ENCODE measurements at regions of chr9 and their contacts with region 1.

Region 1: DNA sequence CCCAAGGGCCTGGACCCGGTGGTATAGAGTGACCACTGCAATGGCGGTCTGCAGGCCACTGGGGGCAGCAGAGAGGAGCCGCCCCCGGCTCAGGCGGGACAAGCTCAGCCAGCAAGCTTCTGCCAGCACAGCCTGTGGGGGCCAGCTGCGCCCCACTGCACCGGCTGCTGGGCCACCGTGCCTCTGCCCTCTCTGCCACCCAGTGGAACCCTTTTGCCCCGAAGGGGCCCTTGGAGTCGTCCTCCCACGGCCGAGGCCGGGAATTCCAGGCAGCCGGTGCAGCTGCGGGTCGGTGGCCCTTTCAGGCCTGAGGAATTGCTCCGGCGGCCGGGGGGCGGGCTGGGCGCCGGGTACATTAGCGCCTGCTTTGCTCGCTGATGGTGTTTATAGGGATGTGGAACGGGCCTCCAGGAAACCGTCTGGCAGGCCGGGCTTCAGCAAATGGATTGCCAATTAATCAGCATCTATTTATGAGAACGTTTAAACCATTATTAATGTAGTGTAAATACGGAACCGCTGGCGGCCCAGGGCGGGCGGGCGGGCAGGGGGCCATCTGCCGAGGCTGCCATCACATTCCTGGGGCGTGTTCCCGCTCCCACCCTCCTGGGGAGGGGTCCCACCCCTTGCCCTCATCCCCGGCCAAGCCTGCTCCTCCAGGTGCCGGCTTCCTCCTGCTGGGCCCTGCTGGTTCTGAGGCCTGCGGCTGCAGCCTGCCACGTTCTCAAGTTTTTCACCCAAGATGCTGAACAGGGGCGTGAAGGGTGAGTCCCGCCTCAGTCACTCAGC is 127.4 kb downstream of the BARX1 start:
- DNase-seq: peak in 2 of 3 donors; percentile 55 to 63
- ATAC-seq: peak; percentile 89 to 98 (median 96)
- H3K4me3 ChIP-seq: peak overlapping the region; percentile 6 to 33 (median 24)
- H3K27ac ChIP-seq: no peak overlapping the region
- H3K4me1 ChIP-seq: peaks cover 0 to 9% (median 0%) of the 10 kb centered on the region in 4 donors
- H3K27me3 ChIP-seq: peaks cover 0 to 5% of the 10 kb centered on the region in 2 donors
- CTCF ChIP-seq: peak; percentile 57 to 88 (median 83)
- POLR2A ChIP-seq: no peak

Region 2: DNA sequence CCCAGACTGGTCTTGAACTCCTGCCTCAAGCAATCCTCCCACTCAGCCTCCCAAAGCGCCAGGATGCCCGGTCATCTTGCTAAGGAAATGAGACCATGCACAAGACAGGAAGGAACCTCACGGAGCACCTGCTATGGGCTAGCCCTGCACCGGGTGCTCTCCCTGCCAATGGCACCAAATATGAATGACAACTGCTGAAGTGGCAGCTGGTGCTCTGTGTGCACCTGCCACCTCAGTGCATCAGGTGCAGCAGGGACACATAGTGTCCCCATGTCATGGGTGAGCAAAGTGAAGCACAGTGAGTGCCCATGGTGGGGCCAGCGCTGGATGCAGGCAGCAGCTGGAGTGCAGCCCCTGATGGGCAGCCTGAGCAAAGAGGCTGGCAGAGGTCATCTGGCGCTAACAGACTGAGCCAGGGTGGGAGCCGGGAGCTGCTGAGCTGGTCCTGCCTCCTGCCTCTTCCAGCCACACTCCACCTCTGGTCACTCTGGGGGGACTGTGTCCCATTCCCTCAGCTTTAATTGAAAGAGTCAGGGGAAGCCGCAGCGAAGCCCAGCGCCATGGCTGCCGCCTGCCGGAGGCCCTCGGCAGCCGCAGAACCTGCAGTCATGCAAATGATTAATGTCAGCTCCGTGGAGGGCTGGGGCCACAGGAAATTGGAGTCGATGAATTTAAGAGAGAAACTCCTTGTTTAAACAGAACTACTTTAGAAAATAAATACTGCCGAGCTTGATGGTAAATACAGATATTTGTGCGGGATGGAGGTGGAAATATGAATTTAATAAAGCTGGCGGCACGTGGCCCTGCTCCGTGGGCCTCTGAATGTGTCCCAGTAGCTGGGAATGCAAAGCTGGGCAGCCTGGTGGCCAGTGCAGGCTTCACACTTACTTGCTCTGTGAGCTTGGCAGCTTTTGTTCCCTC is 81.1 kb after region 1 on chr9:
- intact Hi-C with region 1: loop called in 1 of 2 experiments (anchors 10 kb)
- DNase-seq: peak in 2 of 3 donors; percentile 4 to 35
- ATAC-seq: no peak
- H3K4me3 ChIP-seq: no peak overlapping the region
- H3K27ac ChIP-seq: no peak overlapping the region
- H3K4me1 ChIP-seq: no peaks in the 10 kb centered on the region
- H3K27me3 ChIP-seq: no peaks in the 10 kb centered on the region
- CTCF ChIP-seq: no peak
- POLR2A ChIP-seq: no peak

Region 3: GRCh38 chr9:93962561-93963440 is 135.1 kb after region 1 on chr9:
- intact Hi-C with region 1: loop called in 1 of 2 experiments (anchors 5 kb)
- DNase-seq: peak; percentile 74 to 78 (median 75)
- ATAC-seq: peak; percentile 84 to 95 (median 91)
- H3K4me3 ChIP-seq: no peak overlapping the region
- H3K27ac ChIP-seq: no peak overlapping the region
- H3K4me1 ChIP-seq: peaks cover 0 to 10% (median 0%) of the 10 kb centered on the region in 4 donors
- H3K27me3 ChIP-seq: peaks cover 21 to 36% of the 10 kb centered on the region in 2 donors
- CTCF ChIP-seq: peak; percentile 86 to 91 (median 86)
- POLR2A ChIP-seq: no peak